ENCODE measurements at regions of chr10 and their contacts with region 1.

Region 1: GRCh38 chr10:76973515-76974278 is 663.9 kb downstream of the KCNMA1 start:
- DNase-seq: peak; percentile 46
- H3K4me3 ChIP-seq: no peak overlapping the region
- H3K27ac ChIP-seq: peak overlapping the region in 1 of 2 experiments; percentile 100; a peak in 2 of 4 replicates
- H3K4me1 ChIP-seq: peaks cover 0 to 76% of the 10 kb centered on the region in 2 experiments; a peak in 2 of 4 replicates
- H3K27me3 ChIP-seq: no peaks in the 10 kb centered on the region
- CTCF ChIP-seq: no peak
- EP300 ChIP-seq: peak in 1 of 2 experiments; percentile 92; a peak in 2 of 4 replicates
- RAD21 ChIP-seq: peak; percentile 12; the same call in 1 of the 2 replicates

Region 2: DNA sequence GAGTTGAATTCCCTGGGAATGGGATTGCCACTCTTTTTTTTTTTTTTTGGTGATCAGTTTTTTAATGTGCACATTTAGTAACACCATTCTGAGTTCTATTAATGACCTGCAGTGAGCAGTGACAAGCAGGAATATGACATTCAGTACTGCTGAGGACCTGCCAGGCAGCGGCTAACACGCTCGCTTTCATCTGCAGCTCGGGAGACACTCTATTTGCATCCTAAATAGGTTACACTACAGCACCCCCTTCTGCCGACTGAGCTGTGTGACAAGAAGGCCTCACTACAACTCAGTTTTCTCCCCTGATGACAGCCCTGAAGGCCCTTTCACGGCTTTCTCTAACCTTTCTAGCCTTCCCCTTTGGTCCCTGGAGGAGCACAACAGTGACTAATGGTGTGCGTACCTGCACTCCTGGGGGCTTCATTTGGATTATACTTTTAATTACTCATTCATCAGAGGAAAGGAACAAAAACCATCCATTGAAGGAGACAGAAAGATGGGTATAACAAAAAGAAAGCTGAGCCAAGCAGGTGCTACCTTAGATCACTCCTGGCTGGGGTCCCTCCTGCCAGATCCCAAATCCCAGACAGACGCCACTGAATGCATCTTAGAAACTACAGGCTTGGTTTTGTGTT is 669.9 kb before region 1 on chr10:
- CTCF ChIA-PET with region 1: interaction called, 10 read pairs
- POLR2A ChIA-PET with region 1: no interaction called
- DNase-seq: peak; percentile 70
- H3K4me3 ChIP-seq: no peak overlapping the region; a peak in 1 of 4 replicates
- H3K27ac ChIP-seq: no peak overlapping the region
- H3K4me1 ChIP-seq: peaks cover 1 to 7% of the 10 kb centered on the region in 2 experiments
- H3K27me3 ChIP-seq: no peaks in the 10 kb centered on the region
- CTCF ChIP-seq: peak; percentile 58
- EP300 ChIP-seq: no peak
- RAD21 ChIP-seq: peak; percentile 93

Region 3: DNA sequence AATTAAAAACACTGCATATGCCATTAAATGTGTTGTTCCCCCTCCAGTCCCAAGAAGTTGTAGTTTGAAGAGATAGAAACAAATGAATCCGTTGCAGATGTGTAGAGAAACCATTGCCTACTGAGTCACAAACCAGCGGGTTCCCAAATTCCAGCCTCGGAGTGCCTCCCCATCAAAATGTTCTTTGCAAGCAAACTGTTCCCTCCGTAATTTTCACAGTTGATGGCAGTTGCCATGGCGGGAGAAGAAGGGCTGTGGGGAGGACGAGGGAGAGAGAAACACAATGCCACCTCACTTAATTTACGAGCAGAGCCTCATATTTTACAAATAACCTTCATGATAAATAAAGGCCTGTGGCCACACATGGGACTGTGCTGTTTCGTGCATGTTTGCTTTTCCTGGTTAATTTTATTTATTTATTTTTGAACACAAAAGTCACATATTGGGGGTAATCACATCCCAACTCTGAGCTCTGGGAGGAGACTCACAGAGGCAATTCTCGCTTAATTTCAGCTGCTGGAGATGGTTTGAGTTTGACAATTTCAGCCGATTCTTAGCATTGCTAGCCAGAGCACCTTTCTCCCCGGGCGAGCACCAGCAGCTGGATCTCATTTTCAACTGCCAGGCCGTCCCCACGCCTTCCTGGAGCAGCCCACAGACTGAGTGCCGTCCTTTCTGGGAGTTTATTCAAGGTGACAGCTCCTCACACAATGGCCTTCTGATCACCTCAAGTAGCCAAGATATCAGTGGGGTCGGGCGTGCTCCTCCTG is 420.2 kb before region 1 on chr10:
- CTCF ChIA-PET with region 1: interaction called, 12 read pairs
- POLR2A ChIA-PET with region 1: interaction called, 58 read pairs
- DNase-seq: peak; percentile 65
- H3K4me3 ChIP-seq: no peak overlapping the region; a peak in 1 of 4 replicates
- H3K27ac ChIP-seq: peak overlapping the region in 1 of 2 experiments; percentile 100; a peak in 2 of 4 replicates
- H3K4me1 ChIP-seq: peaks cover 8 to 49% of the 10 kb centered on the region in 2 experiments; a peak in 3 of 4 replicates
- H3K27me3 ChIP-seq: no peaks in the 10 kb centered on the region
- CTCF ChIP-seq: no peak
- EP300 ChIP-seq: peak in 1 of 2 experiments; percentile 30; a peak in 1 of 4 replicates
- RAD21 ChIP-seq: no peak

Region 4: GRCh38 chr10:76868098-76868977 is 105.4 kb before region 1 on chr10:
- CTCF ChIA-PET with region 1: no interaction called
- POLR2A ChIA-PET with region 1: no interaction called
- DNase-seq: peak; percentile 24
- H3K4me3 ChIP-seq: no peak overlapping the region
- H3K27ac ChIP-seq: peak overlapping the region in 1 of 2 experiments; percentile 20; a peak in 2 of 4 replicates
- H3K4me1 ChIP-seq: peaks cover 0 to 8% of the 10 kb centered on the region in 2 experiments; a peak in 2 of 4 replicates
- H3K27me3 ChIP-seq: no peaks in the 10 kb centered on the region
- CTCF ChIP-seq: no peak
- EP300 ChIP-seq: no peak
- RAD21 ChIP-seq: no peak

Region 5: DNA sequence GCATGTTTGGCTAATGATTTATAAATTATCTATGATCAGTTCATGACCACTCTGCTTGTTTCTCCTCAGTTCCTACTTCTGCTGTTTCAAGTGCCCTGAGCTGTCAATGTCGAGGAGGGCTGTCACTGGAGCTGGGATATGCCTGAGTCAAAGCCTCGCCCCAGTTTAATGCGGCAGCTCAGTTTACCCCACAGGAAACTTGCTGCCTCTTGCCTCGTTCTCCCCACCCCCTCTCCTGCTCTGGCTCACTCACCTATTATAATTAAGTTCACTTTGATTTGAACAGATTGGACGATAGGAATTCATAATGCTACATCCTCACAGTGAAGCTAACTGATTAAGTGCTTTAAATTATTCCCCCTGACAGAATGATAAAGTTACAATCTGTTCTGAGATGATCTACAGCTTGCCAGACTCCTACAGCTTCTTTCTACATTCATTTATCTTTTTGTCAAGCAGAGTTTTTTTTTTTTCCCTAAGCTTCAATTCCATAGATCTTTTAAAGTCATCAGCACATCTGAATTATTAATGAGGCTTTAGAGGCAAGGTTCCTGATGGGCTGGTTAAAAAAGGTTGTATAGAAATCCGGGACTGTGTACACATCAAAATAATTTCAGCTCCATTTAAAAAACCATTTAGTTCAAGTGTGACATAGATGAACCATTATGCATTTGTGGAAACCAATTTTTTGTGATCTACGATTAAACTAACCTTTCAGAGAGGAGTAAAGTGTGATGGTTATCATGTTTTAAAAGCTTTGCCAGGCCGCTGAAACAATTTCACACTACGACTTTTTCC is 94.4 kb before region 1 on chr10:
- CTCF ChIA-PET with region 1: interaction called, 7 read pairs
- POLR2A ChIA-PET with region 1: interaction called, 16 read pairs
- DNase-seq: peak; percentile 34
- H3K4me3 ChIP-seq: no peak overlapping the region
- H3K27ac ChIP-seq: peak overlapping the region in 1 of 2 experiments; percentile 87; a peak in 2 of 4 replicates
- H3K4me1 ChIP-seq: peaks cover 0 to 23% of the 10 kb centered on the region in 2 experiments; a peak in 2 of 4 replicates
- H3K27me3 ChIP-seq: no peaks in the 10 kb centered on the region
- CTCF ChIP-seq: no peak
- EP300 ChIP-seq: peak in 1 of 2 experiments; percentile 51; a peak in 1 of 4 replicates
- RAD21 ChIP-seq: peak; percentile 6; the same call in 1 of the 2 replicates

Region 6: GRCh38 chr10:76942628-76943416 is 30.9 kb before region 1 on chr10:
- CTCF ChIA-PET with region 1: interaction called, 9 read pairs
- POLR2A ChIA-PET with region 1: interaction called, 105 read pairs
- DNase-seq: peak; percentile 37
- H3K4me3 ChIP-seq: no peak overlapping the region
- H3K27ac ChIP-seq: peak overlapping the region in 1 of 2 experiments; percentile 93; a peak in 2 of 4 replicates
- H3K4me1 ChIP-seq: peaks cover 0 to 42% of the 10 kb centered on the region in 2 experiments; a peak in 1 of 4 replicates
- H3K27me3 ChIP-seq: no peaks in the 10 kb centered on the region
- CTCF ChIP-seq: no peak
- EP300 ChIP-seq: peak in 1 of 2 experiments; percentile 78; a peak in 1 of 4 replicates
- RAD21 ChIP-seq: no peak; the same call in 1 of the 2 replicates

Region 7: DNA sequence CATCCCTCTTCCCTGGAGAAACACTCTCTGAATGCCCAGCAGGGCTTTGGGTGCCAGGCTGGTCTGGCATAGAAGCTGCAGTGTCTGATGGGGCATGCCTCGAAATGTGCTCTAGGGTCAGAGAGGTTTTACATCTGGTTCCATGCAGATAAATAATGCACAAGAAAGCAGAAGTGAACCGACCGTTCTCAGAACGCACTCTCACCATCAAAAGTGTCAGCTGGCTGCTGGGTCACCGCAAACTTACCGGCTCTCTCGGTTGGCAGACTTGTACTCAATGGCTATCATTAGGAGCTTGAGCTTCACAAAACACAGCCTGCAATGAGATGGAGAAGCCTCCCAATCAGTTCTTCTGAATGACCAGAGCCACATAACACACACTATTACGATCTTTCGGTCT is 53.9 kb after region 1 on chr10:
- CTCF ChIA-PET with region 1: no interaction called
- POLR2A ChIA-PET with region 1: no interaction called
- DNase-seq: no peak
- H3K4me3 ChIP-seq: no peak overlapping the region; a peak in 1 of 4 replicates
- H3K27ac ChIP-seq: peak overlapping the region in 1 of 2 experiments; percentile 92; a peak in 2 of 4 replicates
- H3K4me1 ChIP-seq: peaks cover 0 to 42% of the 10 kb centered on the region in 2 experiments; a peak in 2 of 4 replicates
- H3K27me3 ChIP-seq: no peaks in the 10 kb centered on the region
- CTCF ChIP-seq: no peak
- EP300 ChIP-seq: no peak
- RAD21 ChIP-seq: no peak

Region 8: GRCh38 chr10:77090381-77091356 is 117.0 kb after region 1 on chr10:
- CTCF ChIA-PET with region 1: no interaction called
- POLR2A ChIA-PET with region 1: interaction called, 15 read pairs
- DNase-seq: peak; percentile 73
- H3K4me3 ChIP-seq: peak overlapping the region in 1 of 2 experiments; percentile 9; a peak in 1 of 4 replicates
- H3K27ac ChIP-seq: peak overlapping the region in 1 of 2 experiments; percentile 100; a peak in 2 of 4 replicates
- H3K4me1 ChIP-seq: peaks cover 0 to 38% of the 10 kb centered on the region in 2 experiments; a peak in 2 of 4 replicates
- H3K27me3 ChIP-seq: no peaks in the 10 kb centered on the region
- CTCF ChIP-seq: no peak
- EP300 ChIP-seq: peak in 1 of 2 experiments; percentile 96; a peak in 2 of 4 replicates
- RAD21 ChIP-seq: peak; percentile 37